ENCODE measurements at regions of chr2 and their contacts with region 1.

Region 1: GRCh38 chr2:38947240-38948239 is 57.9 kb downstream of the ARHGEF33 start:
- DNase-seq: peak; percentile 76
- H3K4me3 ChIP-seq: no peak overlapping the region
- H3K27ac ChIP-seq: no peak overlapping the region
- H3K4me1 ChIP-seq: peaks cover 6% of the 10 kb centered on the region
- H3K27me3 ChIP-seq: peaks cover 0 to 3% of the 10 kb centered on the region in 2 experiments
- CTCF ChIP-seq: peak; percentile 66 to 80
- POLR2A ChIP-seq: no peak

Region 2: GRCh38 chr2:38619458-38620164 is 327.9 kb before region 1 on chr2:
- CTCF ChIA-PET with region 1: no interaction called
- POLR2A ChIA-PET with region 1: no interaction called
- dilution Hi-C with region 1: no loop called
- intact Hi-C with region 1: no loop called
- DNase-seq: peak; percentile 12
- H3K4me3 ChIP-seq: no peak overlapping the region
- H3K27ac ChIP-seq: no peak overlapping the region
- H3K4me1 ChIP-seq: no peaks in the 10 kb centered on the region
- H3K27me3 ChIP-seq: peaks cover 1 to 5% of the 10 kb centered on the region in 2 experiments
- CTCF ChIP-seq: no peak
- POLR2A ChIP-seq: no peak

Region 3: GRCh38 chr2:38959938-38960608 is 12.5 kb after region 1 on chr2:
- CTCF ChIA-PET with region 1: interaction called, 38 read pairs
- POLR2A ChIA-PET with region 1: interaction called, 6 read pairs
- dilution Hi-C with region 1: no loop called
- intact Hi-C with region 1: loop called (anchors 1 kb)
- DNase-seq: peak; percentile 89
- H3K4me3 ChIP-seq: peak overlapping the region in 2 of 3 experiments; percentile 24 to 34
- H3K27ac ChIP-seq: no peak overlapping the region
- H3K4me1 ChIP-seq: peaks cover 4% of the 10 kb centered on the region
- H3K27me3 ChIP-seq: peaks cover 4 to 9% of the 10 kb centered on the region in 2 experiments
- CTCF ChIP-seq: no peak
- POLR2A ChIP-seq: no peak

Region 4: DNA sequence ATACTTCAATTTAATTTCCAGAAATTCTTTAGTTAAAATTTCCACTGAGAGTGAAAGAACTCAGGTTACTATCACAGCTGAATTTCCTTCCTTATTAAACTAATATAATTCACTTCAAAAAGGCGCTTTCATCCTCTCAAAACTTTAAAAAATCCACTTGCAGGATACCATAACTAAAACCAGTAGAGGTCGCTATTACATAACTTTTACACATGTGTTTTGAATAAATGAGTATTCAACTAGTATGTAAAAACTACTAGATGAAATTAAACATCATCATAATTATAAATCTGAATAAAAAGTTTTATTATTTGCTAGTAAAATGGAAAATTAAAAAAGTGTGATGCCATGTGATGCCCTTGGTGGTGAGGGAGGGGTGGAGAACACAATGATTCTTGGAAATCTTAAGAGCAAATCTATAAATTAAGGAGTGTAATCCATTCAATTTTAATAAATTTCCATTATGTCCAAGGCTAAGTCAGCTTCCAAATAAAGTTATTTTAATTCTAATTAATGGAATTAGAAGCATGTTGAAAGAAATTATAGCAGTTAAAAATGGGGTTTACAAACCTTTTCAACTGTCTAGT is 111.9 kb after region 1 on chr2:
- CTCF ChIA-PET with region 1: interaction called, 11 read pairs
- POLR2A ChIA-PET with region 1: no interaction called
- dilution Hi-C with region 1: no loop called
- intact Hi-C with region 1: loop called (anchors 2 kb)
- DNase-seq: peak; percentile 60
- H3K4me3 ChIP-seq: no peak overlapping the region
- H3K27ac ChIP-seq: no peak overlapping the region
- H3K4me1 ChIP-seq: no peaks in the 10 kb centered on the region
- H3K27me3 ChIP-seq: no peaks in the 10 kb centered on the region
- CTCF ChIP-seq: peak; percentile 14 to 41
- POLR2A ChIP-seq: no peak

Region 5: GRCh38 chr2:39234754-39235153 is 287.2 kb after region 1 on chr2:
- CTCF ChIA-PET with region 1: interaction called, 449 read pairs
- POLR2A ChIA-PET with region 1: interaction called, 4 read pairs
- dilution Hi-C with region 1: no loop called
- intact Hi-C with region 1: no loop called
- DNase-seq: no peak
- H3K4me3 ChIP-seq: no peak overlapping the region
- H3K27ac ChIP-seq: no peak overlapping the region
- H3K4me1 ChIP-seq: no peaks in the 10 kb centered on the region
- H3K27me3 ChIP-seq: no peaks in the 10 kb centered on the region
- CTCF ChIP-seq: no peak
- POLR2A ChIP-seq: no peak